CD4-positive, alpha-beta memory T cell (primary cell): ENCODE measurements at regions of chr4 and their contacts with region 1.

Region 1: GRCh38 chr4:54233277-54233696 is 4.2 kb downstream of the PDGFRA start:
- DNase-seq: peak; percentile 52 to 68 (median 66)
- H3K4me3 ChIP-seq: peak overlapping the region in 1 of 2 donors; percentile 58
- H3K4me3 Mint-ChIP-seq: peak overlapping the region; percentile 82 to 88 (median 85)
- H3K27ac ChIP-seq: no peak overlapping the region
- H3K27ac Mint-ChIP-seq: no peak overlapping the region
- H3K4me1 ChIP-seq: peaks cover 17% of the 10 kb centered on the region
- H3K4me1 Mint-ChIP-seq: peaks cover 9 to 36% (median 23%) of the 10 kb centered on the region in 4 donors
- H3K27me3 ChIP-seq: peaks cover 13% of the 10 kb centered on the region
- H3K27me3 Mint-ChIP-seq: peaks cover 39 to 48% of the 10 kb centered on the region in 2 donors

Region 2: GRCh38 chr4:52911684-52912294 is 1321.5 kb before region 1 on chr4:
- CTCF ChIA-PET with region 1: interaction called, 5 read pairs
- POLR2A ChIA-PET with region 1: no interaction called
- intact Hi-C with region 1: loop called (anchors 5 kb)
- DNase-seq: peak; percentile 45 to 57 (median 50)
- H3K4me3 ChIP-seq: no peak overlapping the region
- H3K4me3 Mint-ChIP-seq: no peak overlapping the region
- H3K27ac ChIP-seq: no peak overlapping the region
- H3K27ac Mint-ChIP-seq: peak overlapping the region in 1 of 7 donors; percentile 42
- H3K4me1 ChIP-seq: no peaks in the 10 kb centered on the region
- H3K4me1 Mint-ChIP-seq: peaks cover 0 to 7% (median 2%) of the 10 kb centered on the region in 4 donors
- H3K27me3 ChIP-seq: no peaks in the 10 kb centered on the region
- H3K27me3 Mint-ChIP-seq: peaks cover 0 to 1% of the 10 kb centered on the region in 2 donors

Region 3: GRCh38 chr4:53365486-53366300 is 867.6 kb before region 1 on chr4 and contains the start of gene SCFD2:
- CTCF ChIA-PET with region 1: no interaction called
- POLR2A ChIA-PET with region 1: no interaction called
- intact Hi-C with region 1: loop called (anchors 5 kb)
- DNase-seq: peak; percentile 93 to 98 (median 95)
- H3K4me3 ChIP-seq: peak within 1 kb of the TSS; percentile 77 to 97
- H3K4me3 Mint-ChIP-seq: peak within 1 kb of the TSS; percentile 94 to 98 (median 96)
- H3K27ac ChIP-seq: peak within 1 kb of the TSS; percentile 74
- H3K27ac Mint-ChIP-seq: peak within 1 kb of the TSS; percentile 95 to 98 (median 97)
- H3K4me1 ChIP-seq: peaks cover 46% of the 10 kb centered on the region
- H3K4me1 Mint-ChIP-seq: peaks cover 38 to 56% (median 47%) of the 10 kb centered on the region in 4 donors
- H3K27me3 ChIP-seq: no peaks in the 10 kb centered on the region
- H3K27me3 Mint-ChIP-seq: peaks cover 3 to 5% of the 10 kb centered on the region in 2 donors
- total RNA-seq, gene SCFD2: 12.4 to 13.1 TPM

Region 4: GRCh38 chr4:53908661-53909078 is 324.6 kb before region 1 on chr4:
- CTCF ChIA-PET with region 1: interaction called, 64 read pairs
- POLR2A ChIA-PET with region 1: no interaction called
- intact Hi-C with region 1: loop called (anchors 1 kb)
- DNase-seq: peak in 4 of 5 donors; percentile 6 to 21 (median 14)
- H3K4me3 ChIP-seq: no peak overlapping the region
- H3K4me3 Mint-ChIP-seq: peak overlapping the region in 2 of 8 donors; percentile 13 to 17
- H3K27ac ChIP-seq: no peak overlapping the region
- H3K27ac Mint-ChIP-seq: no peak overlapping the region
- H3K4me1 ChIP-seq: peaks cover 3% of the 10 kb centered on the region
- H3K4me1 Mint-ChIP-seq: peaks cover 0 to 9% (median 7%) of the 10 kb centered on the region in 4 donors
- H3K27me3 ChIP-seq: peaks cover 10% of the 10 kb centered on the region
- H3K27me3 Mint-ChIP-seq: peaks cover 20 to 24% of the 10 kb centered on the region in 2 donors

Region 5: DNA sequence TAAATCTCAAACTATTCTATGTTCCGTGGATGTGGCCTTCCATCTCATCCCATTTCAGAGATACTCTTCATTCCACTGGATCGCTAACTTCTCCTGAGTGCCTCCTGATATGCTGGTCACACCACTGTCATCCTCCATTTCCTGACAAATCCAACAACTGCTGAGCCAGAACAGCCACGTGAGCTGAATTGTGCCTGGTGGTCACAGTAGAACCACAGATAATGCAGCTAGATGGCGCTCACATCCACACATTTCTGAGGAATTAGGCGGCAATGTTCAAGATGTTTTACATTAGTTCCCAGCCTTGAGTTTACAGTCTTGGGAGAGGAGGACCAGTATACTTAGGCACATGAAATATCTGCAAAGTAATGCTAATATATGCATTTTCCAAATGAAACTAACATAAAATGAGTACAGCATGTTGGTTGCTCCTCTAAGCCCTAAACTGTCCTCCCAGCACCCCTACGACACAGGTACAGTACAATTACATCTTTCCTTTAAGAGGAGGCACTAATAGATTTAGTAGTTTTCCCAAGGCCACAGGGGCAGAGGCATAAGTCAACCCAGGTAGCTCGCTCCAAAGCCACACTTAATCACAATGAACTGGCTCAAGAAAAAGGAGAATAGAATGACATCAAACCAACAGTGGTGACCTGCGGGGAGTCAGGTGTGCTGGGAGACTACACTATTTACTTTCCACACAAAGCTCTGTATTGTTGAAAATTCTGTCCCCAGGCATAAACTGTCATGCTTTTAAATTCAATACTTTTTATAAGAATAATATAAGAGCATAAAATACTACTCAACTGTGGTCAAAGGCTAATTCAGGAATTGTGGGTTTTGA is 303.1 kb before region 1 on chr4:
- CTCF ChIA-PET with region 1: interaction called, 188 read pairs
- POLR2A ChIA-PET with region 1: interaction called, 7 read pairs
- intact Hi-C with region 1: loop called (anchors 1 kb)
- DNase-seq: peak; percentile 44 to 49 (median 45)
- H3K4me3 ChIP-seq: no peak overlapping the region
- H3K4me3 Mint-ChIP-seq: no peak overlapping the region
- H3K27ac ChIP-seq: no peak overlapping the region
- H3K27ac Mint-ChIP-seq: no peak overlapping the region
- H3K4me1 ChIP-seq: no peaks in the 10 kb centered on the region
- H3K4me1 Mint-ChIP-seq: no peaks in the 10 kb centered on the region
- H3K27me3 ChIP-seq: no peaks in the 10 kb centered on the region
- H3K27me3 Mint-ChIP-seq: peaks cover 0 to 4% of the 10 kb centered on the region in 2 donors

Region 6: DNA sequence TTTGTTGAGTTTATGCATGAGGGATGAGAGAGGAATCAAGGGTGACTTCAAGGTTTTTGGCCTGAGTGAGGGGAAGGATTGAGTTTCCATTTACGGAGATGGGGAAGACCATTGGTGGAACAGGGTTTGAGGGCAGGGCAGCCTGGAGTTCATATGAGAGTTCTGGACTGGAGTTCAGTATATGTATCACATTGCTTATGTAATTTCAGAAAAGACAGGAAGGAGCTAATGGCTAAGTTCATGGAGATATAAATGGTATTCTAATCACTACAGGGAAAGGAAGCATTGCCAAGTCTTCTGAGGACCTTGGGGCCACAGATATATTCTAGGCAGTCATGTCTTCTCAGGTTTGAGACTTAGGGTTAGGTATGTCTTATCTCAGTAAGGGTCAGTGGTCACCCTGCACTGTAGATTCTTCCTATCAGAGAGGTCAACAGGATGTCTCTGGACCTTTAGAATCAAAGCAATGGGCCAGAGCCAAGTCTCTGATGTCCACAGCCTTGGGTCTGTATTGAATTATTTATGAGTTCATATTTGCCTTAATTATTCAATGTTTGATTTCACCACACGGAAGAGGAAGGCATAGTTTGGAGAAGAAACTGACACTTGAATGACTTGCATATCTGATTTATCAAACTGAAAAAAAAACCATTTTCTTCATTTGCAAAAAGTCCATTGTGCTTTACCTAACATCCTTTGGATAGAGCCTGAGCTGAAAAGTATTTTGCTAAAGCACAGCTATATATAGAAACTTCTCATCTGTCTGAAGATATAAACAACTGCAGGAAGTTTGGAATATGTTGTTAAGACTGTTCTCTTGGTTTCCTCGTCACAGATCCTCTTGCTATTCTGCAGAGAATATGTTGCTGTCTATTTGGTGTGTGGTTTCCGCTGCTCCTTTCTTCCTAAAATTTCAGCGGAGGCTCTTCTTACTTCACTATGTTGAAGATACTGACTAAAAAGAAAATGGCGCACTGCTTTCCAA is 135.3 kb after region 1 on chr4:
- CTCF ChIA-PET with region 1: no interaction called
- POLR2A ChIA-PET with region 1: no interaction called
- intact Hi-C with region 1: no loop called
- DNase-seq: no peak
- H3K4me3 ChIP-seq: no peak overlapping the region
- H3K4me3 Mint-ChIP-seq: no peak overlapping the region
- H3K27ac ChIP-seq: no peak overlapping the region
- H3K27ac Mint-ChIP-seq: no peak overlapping the region
- H3K4me1 ChIP-seq: no peaks in the 10 kb centered on the region
- H3K4me1 Mint-ChIP-seq: no peaks in the 10 kb centered on the region
- H3K27me3 ChIP-seq: no peaks in the 10 kb centered on the region
- H3K27me3 Mint-ChIP-seq: peaks cover 1 to 6% of the 10 kb centered on the region in 2 donors